Adrenal gland (tissue), 19 donors: ENCODE measurements at regions of chr16 and their contacts with region 1.

Region 1: GRCh38 chr16:23803591-23804123 is 32.1 kb upstream of the PRKCB start:
- DNase-seq: peak; percentile 18 to 64 (median 34)
- H3K4me3 ChIP-seq: no peak overlapping the region
- H3K27ac ChIP-seq: no peak overlapping the region
- H3K4me1 ChIP-seq: no peaks in the 10 kb centered on the region
- H3K27me3 ChIP-seq: peaks cover 6% of the 10 kb centered on the region
- CTCF ChIP-seq: peak in 4 of 6 experiments; percentile 24 to 40 (median 32)
- POLR2A ChIP-seq: no peak

Region 2: DNA sequence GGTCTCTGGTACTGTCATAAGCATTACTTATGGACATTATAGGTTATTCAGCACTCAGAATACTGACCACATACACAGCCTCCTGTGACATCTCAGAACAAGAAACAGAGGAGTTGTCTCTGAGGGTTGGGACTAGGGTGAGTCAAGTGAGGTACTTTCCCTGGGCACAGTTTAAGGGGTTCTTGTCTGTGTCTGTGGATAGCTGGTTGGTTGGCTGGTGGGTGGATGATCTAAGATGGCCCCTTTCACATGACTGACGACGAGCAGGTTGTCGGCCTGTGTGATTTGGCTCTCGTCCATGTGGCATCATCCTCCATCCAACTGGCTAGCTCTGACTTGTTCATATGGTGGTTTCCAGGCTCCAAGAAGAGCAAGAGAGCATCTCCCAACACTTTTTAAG is 196.0 kb after region 1 on chr16:
- intact Hi-C with region 1: loop called in 1 of 2 experiments (anchors 10 kb)
- DNase-seq: no peak
- H3K4me3 ChIP-seq: no peak overlapping the region
- H3K27ac ChIP-seq: no peak overlapping the region
- H3K4me1 ChIP-seq: no peaks in the 10 kb centered on the region
- H3K27me3 ChIP-seq: no peaks in the 10 kb centered on the region
- CTCF ChIP-seq: no peak
- POLR2A ChIP-seq: no peak

Region 3: DNA sequence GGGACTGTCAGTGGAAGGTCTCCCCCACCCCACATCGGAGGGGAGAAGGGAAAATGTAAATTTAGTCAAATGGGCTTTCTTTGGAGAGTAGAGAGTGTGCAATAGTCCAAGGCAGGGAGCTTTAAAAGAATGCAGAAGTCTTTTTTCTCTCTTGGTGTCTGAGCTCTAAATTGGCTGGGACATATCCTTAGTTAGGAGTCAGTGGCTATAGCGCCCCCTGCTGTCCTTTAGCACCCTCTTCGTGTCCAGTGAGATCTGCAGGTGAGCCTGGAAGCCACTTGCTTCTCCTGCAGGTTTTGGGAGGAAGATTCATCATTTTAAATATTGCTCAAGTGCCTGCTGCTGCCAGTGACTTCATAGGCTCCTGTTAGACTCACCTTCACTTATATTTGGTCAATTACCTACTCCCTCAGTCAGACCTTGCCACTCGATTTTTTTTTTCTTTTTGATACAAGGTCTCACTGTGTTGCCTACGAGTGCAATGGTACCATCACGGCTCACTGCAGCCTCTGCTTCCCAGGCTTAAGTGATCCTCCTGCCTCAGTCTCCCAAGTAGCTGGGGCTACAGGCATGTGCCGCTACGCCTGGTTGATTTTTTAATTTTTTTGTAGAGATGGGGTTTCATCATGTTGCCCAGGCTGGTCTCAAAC is 206.9 kb after region 1 on chr16:
- intact Hi-C with region 1: loop called (anchors 10 kb)
- DNase-seq: peak; percentile 62 to 87 (median 78)
- H3K4me3 ChIP-seq: no peak overlapping the region
- H3K27ac ChIP-seq: no peak overlapping the region
- H3K4me1 ChIP-seq: no peaks in the 10 kb centered on the region
- H3K27me3 ChIP-seq: no peaks in the 10 kb centered on the region
- CTCF ChIP-seq: peak; percentile 39 to 79 (median 69)
- POLR2A ChIP-seq: no peak

Region 4: GRCh38 chr16:24036614-24037013 is 233.0 kb after region 1 on chr16:
- intact Hi-C with region 1: loop called in 1 of 2 experiments (anchors 5 kb)
- DNase-seq: peak in 6 of 7 donors; percentile 26 to 60 (median 34)
- H3K4me3 ChIP-seq: no peak overlapping the region
- H3K27ac ChIP-seq: no peak overlapping the region
- H3K4me1 ChIP-seq: no peaks in the 10 kb centered on the region
- H3K27me3 ChIP-seq: peaks cover 5% of the 10 kb centered on the region
- CTCF ChIP-seq: peak; percentile 41 to 74 (median 66)
- POLR2A ChIP-seq: no peak